Prostate gland (tissue), 2 donors: ENCODE measurements at regions of chr6 and their contacts with region 1.

Region 1: GRCh38 chr6:137271245-137272183 is 52.3 kb upstream of the IFNGR1 start:
- DNase-seq: peak; percentile 21
- H3K4me3 ChIP-seq: no peak overlapping the region
- H3K27ac ChIP-seq: no peak overlapping the region
- H3K4me1 ChIP-seq: no peaks in the 10 kb centered on the region
- H3K27me3 ChIP-seq: no peaks in the 10 kb centered on the region
- CTCF ChIP-seq: peak; percentile 70 to 92 (median 81)
- POLR2A ChIP-seq: no peak

Region 2: DNA sequence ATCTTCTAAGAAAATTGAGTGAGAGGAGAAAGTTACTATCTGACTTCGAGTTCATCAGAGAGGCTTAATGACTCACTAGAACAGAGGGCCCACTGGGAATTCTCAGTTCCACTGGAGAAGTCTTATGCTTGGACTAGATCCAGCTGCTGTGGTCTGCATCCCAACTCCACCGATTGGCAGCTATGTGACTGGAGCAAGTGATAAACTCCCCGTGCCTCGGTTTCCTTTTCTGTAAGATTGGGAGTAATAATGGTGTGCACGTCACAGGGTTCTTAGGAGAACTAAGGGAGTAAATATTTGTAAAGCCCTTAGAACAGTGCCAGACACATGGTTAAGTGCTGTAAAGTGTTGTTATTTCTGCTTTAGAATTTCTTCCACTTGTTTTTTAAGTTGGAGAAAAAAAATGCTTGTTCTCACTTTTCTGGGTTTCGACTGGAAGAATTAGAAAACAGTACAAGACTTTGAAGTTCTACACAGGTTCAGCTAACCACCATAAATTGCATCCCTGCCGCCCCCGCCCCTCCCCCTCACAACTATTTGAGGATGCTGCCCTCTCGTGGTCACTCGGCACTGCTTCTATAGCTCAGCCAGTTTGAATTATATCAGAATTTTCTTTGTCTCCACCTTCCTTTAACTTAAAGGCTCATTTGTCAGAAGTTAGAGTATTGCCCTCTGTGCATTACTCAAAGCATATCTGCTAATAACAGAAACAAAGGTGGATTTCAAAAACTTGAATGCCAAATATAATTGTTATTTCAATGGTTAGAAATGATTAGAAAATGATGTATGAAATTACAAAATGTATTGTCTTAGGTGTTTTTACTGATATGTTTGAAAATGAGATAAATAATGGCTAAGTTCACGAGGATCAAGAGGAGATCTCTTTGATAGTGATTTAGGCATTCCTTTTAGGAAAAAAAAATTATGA is 42.7 kb after region 1 on chr6:
- intact Hi-C with region 1: loop called (anchors 2 kb)
- DNase-seq: peak; percentile 60
- H3K4me3 ChIP-seq: no peak overlapping the region
- H3K27ac ChIP-seq: no peak overlapping the region
- H3K4me1 ChIP-seq: no peaks in the 10 kb centered on the region
- H3K27me3 ChIP-seq: no peaks in the 10 kb centered on the region
- CTCF ChIP-seq: peak; percentile 61 to 88 (median 80)
- POLR2A ChIP-seq: no peak

Region 3: GRCh38 chr6:137332637-137333280 is 61.2 kb after region 1 on chr6:
- intact Hi-C with region 1: no loop called
- DNase-seq: no peak
- H3K4me3 ChIP-seq: no peak overlapping the region
- H3K27ac ChIP-seq: no peak overlapping the region
- H3K4me1 ChIP-seq: no peaks in the 10 kb centered on the region
- H3K27me3 ChIP-seq: no peaks in the 10 kb centered on the region
- CTCF ChIP-seq: no peak
- POLR2A ChIP-seq: no peak

Region 4: GRCh38 chr6:137415127-137415833 is 143.8 kb after region 1 on chr6:
- intact Hi-C with region 1: loop called (anchors 5 kb)
- DNase-seq: peak; percentile 33
- H3K4me3 ChIP-seq: peak overlapping the region; percentile 8 to 23
- H3K27ac ChIP-seq: peak overlapping the region; percentile 37 to 50
- H3K4me1 ChIP-seq: no peaks in the 10 kb centered on the region
- H3K27me3 ChIP-seq: no peaks in the 10 kb centered on the region
- CTCF ChIP-seq: peak in 3 of 4 experiments; percentile 51 to 61 (median 54)
- POLR2A ChIP-seq: no peak